Right ventricle myocardium inferior (tissue), 1 donor: ENCODE measurements at regions of chr17 and their contacts with region 1.

Region 1: DNA sequence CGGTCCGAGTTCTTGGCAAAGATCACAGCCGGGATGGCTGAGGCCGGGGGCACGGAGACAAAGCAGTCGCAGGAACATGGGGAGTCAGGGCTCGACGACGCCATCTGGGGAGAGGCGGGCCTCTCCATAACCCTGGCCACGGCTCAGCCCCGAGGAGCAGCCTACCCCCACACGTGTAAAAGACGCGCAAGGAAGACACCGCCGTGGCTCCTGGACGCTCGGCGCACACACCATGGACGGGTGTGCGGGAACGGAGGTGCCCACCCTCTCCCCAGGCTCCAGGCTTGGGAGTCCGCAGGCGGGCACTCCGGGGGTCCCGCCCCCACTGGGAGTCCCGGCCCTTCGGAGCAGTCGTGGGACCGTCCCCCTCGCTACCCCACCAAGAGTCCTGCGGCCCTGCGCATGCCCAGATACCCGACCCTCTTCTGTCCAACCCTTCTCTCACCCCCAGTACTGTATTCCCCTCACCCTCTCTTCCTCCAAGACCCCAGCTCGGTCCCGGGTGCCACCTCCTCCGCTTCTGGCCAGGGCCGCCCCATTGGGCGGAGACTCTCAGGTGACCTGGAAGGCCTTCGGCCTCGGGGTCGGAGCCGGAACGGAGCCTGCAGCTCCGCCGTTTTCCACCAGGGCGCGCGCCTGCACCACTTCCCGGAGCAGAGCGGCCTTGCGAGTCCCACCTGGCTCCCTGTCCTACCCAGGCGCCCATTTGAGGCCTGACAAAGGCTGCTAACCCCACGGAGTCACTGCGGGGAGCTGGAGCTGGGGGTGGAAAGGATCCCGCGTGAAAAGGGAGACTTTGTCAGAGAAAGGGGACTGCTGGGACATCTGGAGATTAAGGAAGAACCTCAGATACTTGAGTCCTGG is at the start of gene SCRN2:
- DNase-seq: peak; percentile 96
- ATAC-seq: peak; percentile 95
- total RNA-seq, gene SCRN2: 27.0 TPM

Region 2: DNA sequence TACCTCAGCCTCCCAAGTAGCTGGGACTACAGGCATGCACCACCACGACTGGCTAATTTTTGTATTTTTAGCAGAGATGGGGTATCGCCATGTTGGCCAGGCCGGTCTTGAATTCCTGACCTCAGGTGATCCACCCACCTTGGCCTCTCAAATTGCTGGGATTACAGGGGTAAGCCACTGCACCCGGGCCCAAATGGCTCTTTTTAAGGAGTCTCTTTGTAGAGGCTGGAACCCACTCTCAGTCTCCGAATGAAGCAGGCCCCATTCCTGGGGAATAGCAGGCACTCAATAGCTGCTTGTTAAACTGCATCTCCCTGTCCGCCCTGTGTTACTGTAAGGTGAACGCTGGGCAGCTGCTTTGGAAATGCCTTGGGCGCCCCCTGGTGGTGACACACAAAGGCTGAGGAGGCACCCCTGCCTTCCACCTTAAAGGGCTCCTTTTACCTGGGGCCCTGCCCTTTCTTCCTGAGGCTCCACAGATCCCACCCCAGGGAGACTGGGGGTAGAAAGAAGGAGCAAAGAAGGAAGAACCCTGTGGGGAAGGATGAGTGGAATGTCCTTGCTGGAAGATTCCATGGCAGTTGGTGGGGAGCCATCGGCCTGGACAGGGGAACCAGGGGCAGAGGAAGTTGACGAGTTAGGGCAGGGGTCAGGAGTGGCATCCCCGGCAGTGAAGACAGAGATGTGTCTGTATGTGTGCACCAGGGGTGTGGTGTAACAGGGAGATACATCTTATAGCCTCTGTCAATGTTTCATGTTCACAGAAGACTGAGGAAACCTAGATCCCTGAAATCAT is 49.0 kb after region 1 on chr17:
- intact Hi-C with region 1: loop called (anchors 1 kb)
- DNase-seq: peak; percentile 91
- ATAC-seq: peak; percentile 90

Region 3: GRCh38 chr17:47949136-47949759 is 108.3 kb after region 1 on chr17:
- intact Hi-C with region 1: loop called (anchors 2 kb)
- DNase-seq: peak; percentile 96
- ATAC-seq: peak; percentile 90